Mucosa of descending colon (tissue), 3 donors: ENCODE measurements at regions of chr11 and their contacts with region 1.

Region 1: GRCh38 chr11:62081378-62082291 is 42.2 kb upstream of the INCENP start:
- DNase-seq: peak; percentile 74 to 81 (median 80)
- ATAC-seq: peak; percentile 96
- H3K4me3 ChIP-seq: no peak overlapping the region
- H3K4me1 ChIP-seq: no peaks in the 10 kb centered on the region
- CTCF ChIP-seq: peak; percentile 61

Region 2: GRCh38 chr11:61899146-61899841 is 182.3 kb before region 1 on chr11:
- intact Hi-C with region 1: loop called in 1 of 2 experiments (anchors 5 kb)
- DNase-seq: peak; percentile 90
- ATAC-seq: peak; percentile 95
- H3K4me3 ChIP-seq: no peak overlapping the region
- H3K4me1 ChIP-seq: no peaks in the 10 kb centered on the region
- CTCF ChIP-seq: peak; percentile 99

Region 3: DNA sequence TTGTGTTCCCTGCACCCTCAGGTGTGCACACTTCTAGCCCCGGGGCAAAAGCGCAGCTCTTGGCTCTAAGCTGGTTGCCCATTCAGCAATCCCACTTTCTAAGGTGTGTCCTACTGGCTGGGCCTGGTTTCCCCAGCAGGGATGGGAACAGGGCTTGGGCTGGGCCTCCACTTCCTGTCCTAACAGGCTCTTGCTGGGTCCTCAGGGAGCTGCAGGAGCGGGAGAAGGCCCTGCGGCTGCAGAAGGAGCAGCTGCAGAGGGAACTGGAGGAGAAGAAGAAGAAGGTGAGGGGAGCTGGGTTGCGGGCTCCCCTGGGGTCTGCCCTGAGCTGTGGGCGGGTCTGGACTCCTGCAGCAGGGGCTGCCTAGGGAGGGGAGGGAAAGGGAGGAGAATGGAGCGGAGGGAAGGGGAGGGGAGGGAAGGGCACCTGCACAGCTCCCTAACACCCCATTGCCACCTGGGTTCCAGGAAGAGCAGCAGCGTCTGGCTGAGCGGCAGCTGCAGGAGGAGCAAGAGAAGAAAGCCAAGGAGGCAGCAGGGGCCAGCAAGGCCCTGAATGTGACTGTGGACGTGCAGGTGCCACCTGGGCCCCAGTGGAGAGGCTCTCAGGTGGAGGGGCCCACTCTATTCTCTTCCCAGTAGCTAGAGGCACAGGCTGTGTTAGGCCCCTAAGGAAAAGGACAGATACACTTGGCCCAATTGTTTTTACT is 66.8 kb after region 1 on chr11:
- intact Hi-C with region 1: no loop called
- DNase-seq: no peak
- ATAC-seq: no peak
- H3K4me3 ChIP-seq: no peak overlapping the region
- H3K4me1 ChIP-seq: no peaks in the 10 kb centered on the region
- CTCF ChIP-seq: no peak

Region 4: DNA sequence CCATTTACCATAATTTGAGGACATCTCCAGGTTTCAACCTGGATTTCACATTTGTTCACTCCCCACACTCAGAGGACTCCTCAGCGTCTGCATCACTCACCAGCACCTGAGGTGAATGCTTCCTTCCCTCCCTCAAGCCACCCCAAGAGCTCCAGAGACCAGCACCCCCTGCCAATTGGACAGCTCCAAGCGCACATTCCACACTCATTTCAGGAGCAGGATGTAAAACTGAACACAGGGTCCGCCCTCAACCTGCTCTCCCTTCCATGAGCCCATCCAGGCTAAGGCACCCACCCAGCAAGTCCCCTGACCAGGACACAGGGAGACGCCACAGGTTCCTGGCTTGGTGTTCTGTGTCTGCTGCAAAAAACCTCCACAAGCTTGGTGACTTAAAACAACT is 112.3 kb after region 1 on chr11:
- intact Hi-C with region 1: no loop called
- DNase-seq: no peak
- ATAC-seq: no peak
- H3K4me3 ChIP-seq: no peak overlapping the region
- H3K4me1 ChIP-seq: no peaks in the 10 kb centered on the region
- CTCF ChIP-seq: no peak